Endothelial cell of umbilical vein (primary cell): ENCODE measurements at regions of chr17 and their contacts with region 1.

Region 1: DNA sequence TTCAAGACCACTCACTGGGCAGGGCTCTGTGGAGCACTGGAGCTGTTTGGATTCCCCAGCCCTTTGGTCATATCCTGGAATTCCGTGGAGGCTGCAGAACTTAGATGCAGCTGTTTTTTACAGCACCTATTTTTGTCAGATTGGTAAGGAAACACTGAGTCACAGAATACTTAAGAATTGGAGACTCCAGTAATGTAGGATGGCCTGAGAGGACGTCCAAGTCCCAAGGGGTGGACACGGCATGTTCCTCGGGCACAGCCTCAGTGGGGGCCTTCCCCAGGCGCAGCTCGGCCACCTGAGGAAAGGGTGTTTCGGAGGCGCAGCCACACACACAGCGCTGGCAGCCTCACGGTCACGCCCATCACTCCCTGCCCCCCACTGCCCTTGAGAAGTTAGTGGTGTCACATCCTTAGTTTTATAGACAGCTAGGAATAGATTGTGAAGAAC is 14.8 kb downstream of the PLD6 start:
- DNase-seq: peak; percentile 93
- H3K4me3 ChIP-seq: no peak overlapping the region
- H3K27ac ChIP-seq: peak overlapping the region; percentile 79
- H3K4me1 ChIP-seq: peaks cover 21% of the 10 kb centered on the region
- H3K27me3 ChIP-seq: no peaks in the 10 kb centered on the region
- CTCF ChIP-seq: no peak
- POLR2A ChIP-seq: peak; percentile 34

Region 2: DNA sequence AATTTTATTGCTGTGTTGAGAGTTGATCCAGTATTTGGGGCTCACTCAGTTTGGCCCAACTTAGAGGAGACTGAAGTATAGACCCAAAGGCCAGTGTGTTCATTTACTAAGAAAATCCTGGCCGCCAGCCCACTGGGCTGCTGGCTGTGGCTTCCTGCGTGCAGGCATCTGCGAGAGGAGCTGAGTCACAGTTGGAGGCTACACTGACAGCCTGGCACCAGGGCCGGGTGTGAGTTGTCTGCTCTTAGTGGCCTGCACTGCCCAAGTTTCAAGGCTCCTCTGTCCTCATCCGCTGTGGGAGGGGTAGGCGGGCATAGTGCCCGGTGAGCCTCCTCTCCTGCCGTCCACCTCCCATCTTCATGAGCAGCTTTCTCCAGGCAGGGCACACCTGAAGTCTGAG is 39.4 kb before region 1 on chr17:
- CTCF ChIA-PET with region 1: interaction called, 6 read pairs
- POLR2A ChIA-PET with region 1: interaction called, 3 read pairs
- dilution Hi-C with region 1: no loop called
- intact Hi-C with region 1: loop called (anchors 1 kb)
- DNase-seq: peak; percentile 89
- H3K4me3 ChIP-seq: no peak overlapping the region
- H3K27ac ChIP-seq: peak overlapping the region; percentile 80
- H3K4me1 ChIP-seq: peaks cover 24% of the 10 kb centered on the region
- H3K27me3 ChIP-seq: no peaks in the 10 kb centered on the region
- CTCF ChIP-seq: no peak
- POLR2A ChIP-seq: no peak

Region 3: GRCh38 chr17:17171991-17172939 is 19.1 kb before region 1 on chr17:
- CTCF ChIA-PET with region 1: interaction called, 12 read pairs
- POLR2A ChIA-PET with region 1: no interaction called
- dilution Hi-C with region 1: no loop called
- intact Hi-C with region 1: loop called (anchors 1 kb)
- DNase-seq: peak; percentile 25
- H3K4me3 ChIP-seq: no peak overlapping the region
- H3K27ac ChIP-seq: no peak overlapping the region
- H3K4me1 ChIP-seq: peaks cover 12% of the 10 kb centered on the region
- H3K27me3 ChIP-seq: no peaks in the 10 kb centered on the region
- CTCF ChIP-seq: peak in 1 of 2 donors; percentile 6
- POLR2A ChIP-seq: no peak

Region 4: GRCh38 chr17:17246879-17247278 is 55.5 kb after region 1 on chr17:
- CTCF ChIA-PET with region 1: no interaction called
- POLR2A ChIA-PET with region 1: no interaction called
- dilution Hi-C with region 1: no loop called
- intact Hi-C with region 1: no loop called
- DNase-seq: no peak
- H3K4me3 ChIP-seq: no peak overlapping the region
- H3K27ac ChIP-seq: no peak overlapping the region
- H3K4me1 ChIP-seq: no peaks in the 10 kb centered on the region
- H3K27me3 ChIP-seq: no peaks in the 10 kb centered on the region
- CTCF ChIP-seq: no peak
- POLR2A ChIP-seq: no peak